Ascending aorta (tissue), 2 donors: ENCODE measurements at regions of chr17 and their contacts with region 1.

Region 1: GRCh38 chr17:78939615-78940014 is 14.4 kb upstream of the TIMP2 start:
- DNase-seq: no peak
- H3K4me3 ChIP-seq: no peak overlapping the region
- H3K27ac ChIP-seq: peak overlapping the region; percentile 28 to 33
- H3K4me1 ChIP-seq: peaks cover 15 to 30% of the 10 kb centered on the region in 2 donors
- H3K27me3 ChIP-seq: no peaks in the 10 kb centered on the region
- CTCF ChIP-seq: no peak

Region 2: DNA sequence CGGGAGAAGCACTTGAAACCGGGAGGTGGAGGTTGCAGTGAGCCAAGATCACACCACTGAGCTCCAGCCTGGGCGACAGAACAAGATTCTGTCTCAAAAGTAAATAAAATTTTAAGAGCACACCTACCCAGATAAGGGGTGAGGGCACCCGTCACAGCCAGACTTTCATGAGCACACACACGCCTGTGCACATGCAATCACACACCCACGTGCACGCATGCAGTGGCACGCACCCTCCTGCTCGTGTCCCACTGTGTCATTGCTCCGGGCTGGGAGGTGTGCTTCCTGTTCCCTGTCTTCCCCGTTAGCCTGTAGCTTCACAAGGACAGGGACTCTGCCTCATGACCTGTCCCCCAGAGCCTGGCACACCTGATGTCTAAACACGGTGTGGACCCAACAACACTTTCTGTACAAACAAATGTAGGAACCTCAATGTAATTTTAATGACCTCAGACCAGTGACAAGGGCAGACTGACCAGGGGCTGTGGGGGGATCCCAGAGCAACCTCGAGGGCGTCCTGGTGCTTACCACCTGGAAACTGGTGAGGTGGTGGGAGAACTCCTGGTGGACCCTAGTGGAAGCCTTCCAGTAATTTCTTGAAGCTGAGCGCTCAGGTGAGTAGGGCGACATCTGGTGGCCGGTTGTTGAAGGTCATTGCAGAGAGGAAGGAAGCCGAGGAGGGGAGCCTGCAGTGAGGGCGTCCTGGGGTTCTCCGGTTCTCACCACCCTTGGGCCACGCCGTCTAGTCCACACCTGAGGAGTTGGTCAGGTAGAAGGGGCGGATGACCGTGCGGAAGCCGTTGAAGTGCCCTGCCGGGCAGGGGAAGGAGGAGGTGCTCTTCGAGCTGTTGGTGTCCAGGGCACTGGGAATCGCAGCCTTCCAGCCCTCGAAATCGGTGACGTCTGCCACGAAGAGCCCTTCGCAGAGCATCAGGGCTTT is 31.5 kb after region 1 on chr17:
- intact Hi-C with region 1: loop called (anchors 2 kb)
- DNase-seq: peak; percentile 28 to 90
- H3K4me3 ChIP-seq: peak overlapping the region in 1 of 2 donors; percentile 10
- H3K27ac ChIP-seq: peak overlapping the region in 1 of 2 donors; percentile 58
- H3K4me1 ChIP-seq: peaks cover 7 to 8% of the 10 kb centered on the region in 2 donors
- H3K27me3 ChIP-seq: no peaks in the 10 kb centered on the region
- CTCF ChIP-seq: peak; percentile 86 to 93 (median 92)

Region 3: GRCh38 chr17:79433379-79433778 is 493.8 kb after region 1 on chr17:
- intact Hi-C with region 1: no loop called
- DNase-seq: no peak
- H3K4me3 ChIP-seq: no peak overlapping the region
- H3K27ac ChIP-seq: no peak overlapping the region
- H3K4me1 ChIP-seq: no peaks in the 10 kb centered on the region
- H3K27me3 ChIP-seq: no peaks in the 10 kb centered on the region
- CTCF ChIP-seq: no peak